OCI-LY7 (cell line): ENCODE measurements at regions of chr1 and their contacts with region 1.

Region 1: DNA sequence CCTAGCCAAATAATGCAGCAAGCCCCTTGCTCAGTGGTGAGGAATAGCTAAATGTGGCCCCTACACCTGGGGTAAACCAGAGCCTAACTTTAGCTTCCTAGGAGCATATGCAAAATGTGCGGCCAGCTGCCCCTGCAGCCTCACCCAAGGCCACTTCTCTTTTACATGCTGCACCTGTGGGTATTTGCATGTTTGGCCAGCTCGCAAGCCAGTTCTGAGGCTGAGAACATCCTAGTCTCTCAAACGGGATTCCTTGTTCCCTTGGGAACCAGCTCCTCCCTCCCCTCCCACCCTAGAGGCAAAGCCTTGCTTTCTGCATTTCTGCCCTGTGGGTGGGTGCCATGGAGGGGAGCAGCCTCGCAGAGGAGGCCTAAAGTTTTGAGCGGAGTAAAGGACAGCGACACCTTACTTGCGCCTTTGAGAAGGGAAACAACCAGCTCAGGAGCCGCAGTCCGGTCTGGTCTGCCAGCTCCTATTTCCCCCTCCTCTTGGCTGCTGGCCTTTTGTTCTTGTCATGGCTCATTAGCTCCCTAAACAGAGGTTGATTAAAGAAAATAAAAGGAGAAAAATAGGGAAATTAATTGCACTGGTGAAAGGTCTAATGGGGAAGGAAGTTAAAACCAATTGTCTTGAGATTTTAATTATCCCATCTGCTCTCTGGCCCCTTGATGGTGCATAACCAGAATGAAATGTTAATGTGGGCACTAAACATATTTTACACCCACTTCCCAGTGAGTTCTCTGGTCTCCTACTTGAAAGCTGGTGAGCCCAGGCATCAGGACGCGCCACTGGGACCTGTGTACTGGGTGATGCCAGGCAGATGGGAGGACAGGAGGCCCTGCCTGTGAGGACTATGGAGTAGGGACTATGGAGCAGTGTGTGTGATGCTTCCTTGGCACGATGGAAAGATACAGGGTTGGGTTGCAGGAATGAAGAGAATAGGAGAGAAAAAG is 68.7 kb downstream of the TEX35 start:
- DNase-seq: peak; percentile 98
- H3K4me3 ChIP-seq: peak overlapping the region; percentile 67
- H3K27ac ChIP-seq: peak overlapping the region; percentile 99
- H3K4me1 ChIP-seq: peaks cover 87% of the 10 kb centered on the region
- CTCF ChIP-seq: peak; percentile 64

Region 2: DNA sequence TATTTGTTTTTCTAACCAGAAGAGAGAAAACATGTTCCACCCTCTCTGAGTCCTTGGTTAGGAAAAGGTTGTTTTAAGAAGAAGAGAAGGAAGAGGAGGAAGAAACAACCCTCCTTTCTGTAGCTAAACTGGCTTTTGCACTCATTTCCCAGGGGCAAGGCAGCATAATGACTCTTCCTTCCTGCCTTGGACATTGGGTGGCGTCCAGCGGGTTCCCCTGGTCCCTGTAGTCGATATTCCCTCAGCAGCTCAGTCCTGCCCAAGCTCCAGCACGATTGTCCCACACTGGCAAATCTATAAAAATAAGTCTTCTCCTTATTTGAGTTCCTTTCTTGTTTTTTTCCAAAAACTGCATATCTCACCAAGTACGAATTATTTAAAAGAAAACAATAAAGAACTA is 12.5 kb after region 1 on chr1:
- CTCF ChIA-PET with region 1: interaction called, 4 read pairs
- POLR2A ChIA-PET with region 1: interaction called, 288 read pairs
- intact Hi-C with region 1: no loop called
- DNase-seq: no peak
- H3K4me3 ChIP-seq: no peak overlapping the region
- H3K27ac ChIP-seq: no peak overlapping the region
- H3K4me1 ChIP-seq: peaks cover 28% of the 10 kb centered on the region
- CTCF ChIP-seq: no peak

Region 3: GRCh38 chr1:178607718-178608408 is 26.2 kb after region 1 on chr1:
- CTCF ChIA-PET with region 1: interaction called, 15 read pairs
- POLR2A ChIA-PET with region 1: interaction called, 288 read pairs
- intact Hi-C with region 1: loop called (anchors 1 kb)
- DNase-seq: peak; percentile 45
- H3K4me3 ChIP-seq: no peak overlapping the region
- H3K27ac ChIP-seq: peak overlapping the region; percentile 98
- H3K4me1 ChIP-seq: peaks cover 74% of the 10 kb centered on the region
- CTCF ChIP-seq: no peak

Region 4: GRCh38 chr1:178664278-178664677 is 82.7 kb after region 1 on chr1:
- CTCF ChIA-PET with region 1: no interaction called
- POLR2A ChIA-PET with region 1: interaction called, 11 read pairs
- intact Hi-C with region 1: loop called (anchors 1 kb)
- DNase-seq: peak; percentile 85
- H3K4me3 ChIP-seq: peak overlapping the region; percentile 15
- H3K27ac ChIP-seq: peak overlapping the region; percentile 75
- H3K4me1 ChIP-seq: peaks cover 68% of the 10 kb centered on the region
- CTCF ChIP-seq: no peak

Region 5: GRCh38 chr1:178725603-178726517 is 144.2 kb after region 1 on chr1:
- CTCF ChIA-PET with region 1: interaction called, 10 read pairs
- POLR2A ChIA-PET with region 1: interaction called, 108 read pairs
- intact Hi-C with region 1: loop called (anchors 1 kb)
- DNase-seq: peak; percentile 95
- H3K4me3 ChIP-seq: peak overlapping the region; percentile 92
- H3K27ac ChIP-seq: peak overlapping the region; percentile 84
- H3K4me1 ChIP-seq: peaks cover 32% of the 10 kb centered on the region
- CTCF ChIP-seq: peak; percentile 58

Region 6: DNA sequence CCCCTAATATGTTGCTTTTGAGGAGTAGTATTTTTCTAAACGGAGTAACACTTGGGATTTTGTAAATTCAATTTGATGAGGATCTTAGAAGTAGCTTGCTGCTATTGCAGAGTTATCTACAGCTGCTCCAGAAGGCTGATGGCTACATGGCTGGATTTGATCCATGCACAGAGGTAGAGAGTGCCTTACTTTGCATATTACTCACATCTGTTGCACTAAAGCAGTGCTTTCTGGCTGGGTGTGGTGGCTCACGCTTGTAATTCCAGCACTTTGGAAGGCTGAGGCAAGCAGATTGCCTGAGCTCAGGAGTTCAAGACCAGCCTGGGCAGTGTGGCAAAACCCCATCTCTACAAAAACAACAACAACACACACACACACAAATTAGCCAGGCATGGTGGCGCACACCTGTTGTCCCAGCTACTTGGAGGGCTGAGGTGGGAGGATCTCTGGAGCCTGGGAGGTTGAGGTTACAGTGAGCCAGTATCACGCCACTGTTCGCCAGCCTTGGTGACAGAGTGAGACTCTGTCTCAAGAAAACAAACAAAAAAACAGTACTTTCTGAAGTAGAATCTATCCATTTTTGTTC is 168.0 kb after region 1 on chr1:
- CTCF ChIA-PET with region 1: no interaction called
- POLR2A ChIA-PET with region 1: interaction called, 5 read pairs
- intact Hi-C with region 1: loop called (anchors 1 kb)
- DNase-seq: no peak
- H3K4me3 ChIP-seq: peak overlapping the region; percentile 40
- H3K27ac ChIP-seq: peak overlapping the region; percentile 71
- H3K4me1 ChIP-seq: peaks cover 47% of the 10 kb centered on the region
- CTCF ChIP-seq: no peak

Region 7: DNA sequence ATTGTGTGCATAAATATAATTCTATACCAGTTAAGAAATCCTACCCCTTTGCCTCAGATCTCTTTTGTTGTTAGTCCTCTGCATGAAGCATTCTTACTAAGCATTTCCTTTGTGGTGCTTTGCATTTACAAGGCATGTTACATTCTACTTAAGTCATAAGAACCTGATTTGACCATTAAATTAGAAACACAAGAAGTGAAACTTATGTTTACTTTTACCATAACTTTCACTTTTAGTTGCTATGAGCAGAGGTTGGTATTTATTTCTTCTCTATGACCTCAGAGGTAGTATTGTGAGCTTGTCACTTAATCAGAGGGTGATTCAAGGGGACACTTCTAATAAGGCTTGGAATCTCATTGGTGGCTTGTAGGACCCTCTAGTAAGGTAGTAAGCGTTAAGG is 453.1 kb after region 1 on chr1:
- CTCF ChIA-PET with region 1: no interaction called
- POLR2A ChIA-PET with region 1: interaction called, 13 read pairs
- intact Hi-C with region 1: loop called (anchors 1 kb)
- DNase-seq: peak; percentile 69
- H3K4me3 ChIP-seq: peak overlapping the region; percentile 57
- H3K27ac ChIP-seq: peak overlapping the region; percentile 82
- H3K4me1 ChIP-seq: peaks cover 98% of the 10 kb centered on the region
- CTCF ChIP-seq: no peak

Region 8: DNA sequence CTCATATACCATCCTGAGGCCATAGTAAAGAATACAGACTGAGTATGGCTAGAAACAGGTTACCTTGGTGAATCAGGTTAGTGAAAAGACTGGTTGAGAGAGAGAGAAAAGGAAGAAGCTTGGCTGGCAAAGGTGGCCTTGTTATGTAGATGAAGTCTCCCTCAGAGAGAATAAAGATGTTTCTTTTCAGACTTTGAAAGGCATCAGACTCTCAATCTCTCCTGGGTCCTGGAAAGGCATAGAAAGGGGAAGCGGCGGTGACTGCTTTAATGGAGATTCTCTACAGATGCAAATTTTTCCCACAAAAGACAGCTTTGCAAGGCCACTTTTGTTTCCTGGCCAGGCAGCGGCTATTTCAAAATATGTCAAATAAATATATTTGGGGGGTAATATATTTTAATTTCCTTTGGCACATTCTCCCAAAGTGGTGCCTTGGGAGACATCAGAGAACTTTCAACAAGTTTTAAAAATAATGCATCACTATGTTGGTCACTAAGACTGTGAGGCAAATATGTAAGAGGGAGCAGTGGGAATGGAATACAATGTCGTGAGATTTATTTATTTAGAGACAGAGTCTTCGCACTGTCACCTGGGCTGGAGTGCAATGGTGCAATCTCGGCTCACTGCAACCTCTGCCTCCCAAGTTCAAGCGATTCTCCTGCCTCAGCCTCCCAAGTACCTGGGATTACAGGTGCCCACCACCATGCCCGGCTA is 948.0 kb after region 1 on chr1:
- CTCF ChIA-PET with region 1: no interaction called
- POLR2A ChIA-PET with region 1: no interaction called
- intact Hi-C with region 1: no loop called
- DNase-seq: no peak
- H3K4me3 ChIP-seq: no peak overlapping the region
- H3K27ac ChIP-seq: no peak overlapping the region
- H3K4me1 ChIP-seq: no peaks in the 10 kb centered on the region
- CTCF ChIP-seq: no peak